WTC11 (cell line): ENCODE measurements at regions of chr14 and their contacts with region 1.

Region 1: DNA sequence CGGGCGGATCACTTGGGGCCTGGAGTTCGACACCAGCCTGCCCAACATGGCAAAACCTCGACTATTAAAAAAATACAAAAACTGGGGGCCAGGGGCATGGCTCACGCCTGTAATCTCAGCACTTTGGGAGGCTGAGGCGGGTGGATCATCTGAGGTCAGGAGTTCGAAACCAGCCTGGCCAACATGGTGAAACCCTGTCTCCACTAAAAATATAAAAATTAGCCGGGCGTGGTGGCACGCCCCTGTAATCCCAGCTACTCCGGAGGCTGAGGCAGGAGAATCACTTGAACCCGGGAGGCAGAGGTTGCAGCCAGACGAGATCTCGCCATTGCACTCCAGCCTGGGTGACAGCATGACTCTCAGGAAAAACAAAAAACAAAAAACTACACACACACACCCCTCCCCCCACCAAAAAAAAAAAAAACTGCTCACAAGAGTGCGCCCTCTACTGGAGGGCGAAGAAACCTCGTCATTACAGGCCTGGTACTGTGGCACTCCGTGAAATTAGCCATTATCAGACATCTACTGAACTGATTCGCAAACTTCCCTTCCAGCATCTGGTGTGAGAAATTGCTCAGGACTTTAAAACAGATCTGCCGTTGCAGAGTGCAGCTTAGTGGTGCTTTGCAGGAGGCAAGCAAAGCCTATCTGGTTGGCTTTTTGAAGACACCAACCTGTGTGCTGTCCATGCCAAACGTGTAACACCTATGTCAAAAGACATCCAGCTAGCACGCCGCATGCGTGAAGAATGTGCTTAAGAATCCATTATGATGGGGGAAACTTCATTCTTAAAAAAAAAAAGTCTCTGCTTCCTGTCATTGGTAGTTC is 7.7 kb downstream of the PPP1R3E start:
- DNase-seq: peak; percentile 28
- ATAC-seq: peak; percentile 55
- H3K4me3 Mint-ChIP-seq: no peak overlapping the region
- H3K27ac Mint-ChIP-seq: no peak overlapping the region
- H3K4me1 Mint-ChIP-seq: peaks cover 20% of the 10 kb centered on the region
- H3K27me3 Mint-ChIP-seq: peaks cover 99% of the 10 kb centered on the region
- CTCF ChIP-seq: peak; percentile 90

Region 2: GRCh38 chr14:23186913-23187654 is 107.9 kb before region 1 on chr14:
- CTCF ChIA-PET with region 1: interaction called, 5 read pairs
- POLR2A ChIA-PET with region 1: interaction called, 14 read pairs
- DNase-seq: no peak
- ATAC-seq: peak; percentile 12; the same call in 1 of the 2 replicates
- H3K4me3 Mint-ChIP-seq: no peak overlapping the region
- H3K27ac Mint-ChIP-seq: peak overlapping the region; percentile 64; the same call in 1 of the 2 replicates
- H3K4me1 Mint-ChIP-seq: peaks cover 27% of the 10 kb centered on the region
- H3K27me3 Mint-ChIP-seq: no peaks in the 10 kb centered on the region
- CTCF ChIP-seq: peak; percentile 53; the same call in 1 of the 2 replicates

Region 3: GRCh38 chr14:23252420-23253333 is 42.3 kb before region 1 on chr14:
- CTCF ChIA-PET with region 1: interaction called, 14 read pairs
- POLR2A ChIA-PET with region 1: no interaction called
- DNase-seq: no peak
- ATAC-seq: peak; percentile 67
- H3K4me3 Mint-ChIP-seq: peak overlapping the region; percentile 7
- H3K27ac Mint-ChIP-seq: peak overlapping the region; percentile 82
- H3K4me1 Mint-ChIP-seq: peaks cover 39% of the 10 kb centered on the region
- H3K27me3 Mint-ChIP-seq: no peaks in the 10 kb centered on the region
- CTCF ChIP-seq: no peak

Region 4: DNA sequence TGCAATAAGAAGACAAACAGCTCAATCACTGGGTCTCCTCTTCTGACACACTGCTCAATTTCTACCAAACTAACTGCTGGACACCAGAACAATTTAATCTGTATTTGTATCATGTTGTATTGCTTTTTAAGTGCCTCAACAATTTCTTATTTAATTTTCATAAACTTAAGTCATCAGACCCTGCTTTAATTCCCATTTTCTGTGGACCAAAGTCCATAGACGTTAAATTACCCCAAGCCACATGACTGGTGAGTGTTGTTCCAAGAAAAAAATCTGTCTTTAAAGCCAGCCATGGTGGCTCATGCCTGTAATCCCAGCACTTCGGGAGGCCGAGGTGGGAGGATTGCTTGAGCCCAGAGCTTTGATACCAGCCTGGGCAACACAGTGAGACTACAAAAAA is 17.8 kb before region 1 on chr14:
- CTCF ChIA-PET with region 1: interaction called, 27 read pairs
- POLR2A ChIA-PET with region 1: interaction called, 3 read pairs
- DNase-seq: no peak
- ATAC-seq: no peak
- H3K4me3 Mint-ChIP-seq: no peak overlapping the region
- H3K27ac Mint-ChIP-seq: no peak overlapping the region
- H3K4me1 Mint-ChIP-seq: peaks cover 19% of the 10 kb centered on the region
- H3K27me3 Mint-ChIP-seq: peaks cover 87% of the 10 kb centered on the region
- CTCF ChIP-seq: no peak

Region 5: GRCh38 chr14:23469127-23469905 is 174.4 kb after region 1 on chr14 and contains the start of gene NGDN:
- CTCF ChIA-PET with region 1: no interaction called
- POLR2A ChIA-PET with region 1: no interaction called
- DNase-seq: peak; percentile 96
- ATAC-seq: peak; percentile 98
- H3K4me3 Mint-ChIP-seq: no peak within 1 kb of the TSS
- H3K27ac Mint-ChIP-seq: no peak within 1 kb of the TSS
- H3K4me1 Mint-ChIP-seq: peaks cover 8% of the 10 kb centered on the region
- H3K27me3 Mint-ChIP-seq: peaks cover 30% of the 10 kb centered on the region
- CTCF ChIP-seq: peak; percentile 66
- total RNA-seq, gene NGDN: 37.4 to 45.5 TPM (median 43.3 TPM) in 3 replicates

Region 6: DNA sequence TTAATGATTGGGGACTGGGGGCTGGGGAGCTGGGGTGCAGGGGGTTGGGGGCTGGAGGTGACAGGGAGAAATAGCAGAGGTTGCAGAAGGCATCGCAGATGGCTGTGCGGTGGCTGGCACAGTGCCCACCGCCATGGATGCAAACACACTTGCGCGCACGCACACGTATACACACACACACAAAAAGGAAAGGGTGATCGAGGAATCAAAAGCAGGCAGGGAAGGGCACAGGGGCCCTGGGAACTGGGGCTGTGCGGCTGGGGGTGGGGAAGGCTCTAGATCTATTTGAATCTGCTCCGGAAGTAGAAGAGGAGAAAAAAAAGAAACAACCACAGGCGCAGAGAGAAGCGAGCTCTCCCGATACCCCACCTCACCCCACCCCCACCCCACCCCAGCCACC is 217.2 kb after region 1 on chr14:
- CTCF ChIA-PET with region 1: no interaction called
- POLR2A ChIA-PET with region 1: no interaction called
- DNase-seq: no peak
- ATAC-seq: no peak
- H3K4me3 Mint-ChIP-seq: no peak overlapping the region
- H3K27ac Mint-ChIP-seq: no peak overlapping the region
- H3K4me1 Mint-ChIP-seq: peaks cover 8% of the 10 kb centered on the region
- H3K27me3 Mint-ChIP-seq: peaks cover 40% of the 10 kb centered on the region
- CTCF ChIP-seq: no peak